ENCODE measurements at regions of chr3 and their contacts with region 1.

Region 1: GRCh38 chr3:47475570-47476329 is at the start of gene SCAP:
- DNase-seq: peak; percentile 53
- ATAC-seq: peak; percentile 97
- H3K4me3 ChIP-seq: peak within 1 kb of the TSS; percentile 84 to 95
- H3K27ac ChIP-seq: peak within 1 kb of the TSS; percentile 87
- H3K4me1 ChIP-seq: no peaks in the 10 kb centered on the region; the same call in 1 of the 2 replicates
- H3K27me3 ChIP-seq: no peaks in the 10 kb centered on the region
- CTCF ChIP-seq: peak; percentile 90
- total RNA-seq, gene SCAP: 49.7 TPM

Region 2: GRCh38 chr3:47394140-47394870 is 81.4 kb before region 1 on chr3:
- CTCF ChIA-PET with region 1: interaction called, 13 read pairs
- POLR2A ChIA-PET with region 1: no interaction called
- in situ Hi-C with region 1: no loop called
- intact Hi-C with region 1: no loop called
- DNase-seq: no peak
- ATAC-seq: no peak
- H3K4me3 ChIP-seq: no peak overlapping the region
- H3K27ac ChIP-seq: no peak overlapping the region
- H3K4me1 ChIP-seq: peaks cover 5% of the 10 kb centered on the region; the same call in 1 of the 2 replicates
- H3K27me3 ChIP-seq: no peaks in the 10 kb centered on the region
- CTCF ChIP-seq: no peak

Region 3: DNA sequence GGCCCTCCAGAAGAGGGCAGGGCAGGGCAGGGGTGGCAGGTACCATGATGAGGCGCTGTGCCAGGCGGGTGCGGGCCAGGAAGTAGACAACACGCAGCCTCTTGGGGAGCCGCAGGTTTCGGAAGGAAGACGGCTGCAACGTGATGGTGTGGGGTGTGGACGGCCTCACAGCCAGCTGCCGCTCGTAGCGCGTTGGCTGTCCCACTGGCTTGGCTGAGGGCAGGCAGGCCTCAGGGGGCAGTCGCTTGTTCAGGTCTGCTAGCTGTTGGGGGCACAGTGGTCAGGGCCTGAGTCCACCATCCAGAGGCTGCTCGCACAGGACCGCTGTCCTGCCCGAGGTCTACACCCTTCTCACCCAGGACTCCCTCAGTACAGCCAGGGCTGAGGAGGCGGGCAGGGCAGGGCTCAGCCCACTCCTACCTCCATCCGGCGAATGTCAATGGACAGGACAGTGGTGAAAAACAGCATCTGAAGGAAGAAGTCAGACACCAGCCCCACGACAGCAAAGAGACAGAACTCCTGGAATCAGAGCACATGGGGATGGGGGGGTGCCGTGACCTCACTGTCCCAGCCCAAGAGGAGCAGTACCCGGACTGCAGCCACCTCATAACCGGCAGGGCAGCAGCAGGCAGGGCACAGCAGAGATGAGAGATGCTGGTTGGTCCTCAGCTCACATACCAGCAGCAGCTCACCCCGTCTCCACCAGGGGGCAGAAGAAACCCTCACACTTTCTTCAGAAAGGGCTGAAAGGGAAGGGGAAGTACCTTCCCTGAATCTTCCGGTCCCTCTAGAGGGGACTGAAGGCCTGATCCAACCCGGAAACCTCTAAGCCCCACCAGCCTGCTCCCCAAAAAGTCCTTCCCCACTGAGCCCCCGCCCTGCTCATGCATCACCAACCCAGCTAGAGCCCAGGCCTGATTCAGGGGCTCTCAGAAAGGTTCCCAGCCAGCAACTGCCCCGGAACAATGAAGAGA is 55.0 kb before region 1 on chr3:
- CTCF ChIA-PET with region 1: no interaction called
- POLR2A ChIA-PET with region 1: no interaction called
- in situ Hi-C with region 1: no loop called
- intact Hi-C with region 1: loop called (anchors 10 kb)
- DNase-seq: peak; percentile 77
- ATAC-seq: peak; percentile 79
- H3K4me3 ChIP-seq: no peak overlapping the region
- H3K27ac ChIP-seq: peak overlapping the region; percentile 54; the same call in 1 of the 2 replicates
- H3K4me1 ChIP-seq: no peaks in the 10 kb centered on the region
- H3K27me3 ChIP-seq: no peaks in the 10 kb centered on the region
- CTCF ChIP-seq: peak; percentile 88

Measured in Panc1 (cell line).